Motor neuron (in vitro differentiated cells): ENCODE measurements at regions of chr7 and their contacts with region 1.

Region 1: DNA sequence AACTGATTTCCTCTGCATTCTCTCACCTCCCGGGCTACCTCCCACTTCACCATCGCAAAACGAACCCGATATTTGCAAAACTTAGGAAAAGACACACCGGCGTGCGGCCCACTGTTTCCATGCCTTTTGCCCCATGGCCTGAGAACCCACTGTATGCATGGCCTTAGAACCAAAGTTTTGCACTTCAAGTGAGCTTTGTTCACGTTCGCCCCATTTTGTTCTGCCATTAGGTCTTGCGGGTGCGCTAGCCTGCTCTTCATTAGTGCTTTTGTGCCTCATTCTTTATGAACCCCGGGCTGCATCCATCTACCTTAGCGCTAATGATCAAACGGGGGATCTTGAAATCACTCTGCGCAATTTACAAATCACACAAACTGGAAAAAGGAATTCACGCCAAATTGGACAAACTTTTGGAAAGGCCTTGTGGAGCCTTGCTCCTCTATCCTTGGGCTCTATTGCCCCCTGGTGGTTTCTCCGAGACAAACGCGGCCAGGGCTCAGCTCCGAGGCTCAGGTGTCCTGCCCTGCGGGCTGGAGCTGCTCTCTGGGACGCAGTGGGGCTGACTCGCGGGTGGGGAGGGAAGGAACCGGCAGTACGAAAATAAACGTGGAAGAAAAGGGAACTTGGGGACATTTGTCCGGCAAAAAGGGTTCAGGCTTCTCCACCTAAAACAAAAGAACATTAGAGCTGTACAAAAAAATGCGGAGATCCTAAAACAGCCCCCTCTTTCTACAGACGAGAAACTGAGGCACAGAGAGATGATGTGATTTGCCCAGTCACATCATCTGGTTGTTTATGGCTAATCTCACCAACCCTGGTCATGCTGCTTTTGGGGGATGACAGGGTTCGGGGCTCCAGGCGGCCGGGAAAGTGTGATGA is 300.4 kb upstream of the NFE2L3 start:
- ATAC-seq: peak; percentile 12 to 51 (median 44)
- H3K4me3 ChIP-seq: peak overlapping the region in 3 of 5 donors; percentile 29 to 35 (median 31)
- H3K27ac ChIP-seq: peak overlapping the region in 1 of 2 donors; percentile 40
- H3K4me1 ChIP-seq: peaks cover 24 to 56% of the 10 kb centered on the region in 2 donors

Region 2: DNA sequence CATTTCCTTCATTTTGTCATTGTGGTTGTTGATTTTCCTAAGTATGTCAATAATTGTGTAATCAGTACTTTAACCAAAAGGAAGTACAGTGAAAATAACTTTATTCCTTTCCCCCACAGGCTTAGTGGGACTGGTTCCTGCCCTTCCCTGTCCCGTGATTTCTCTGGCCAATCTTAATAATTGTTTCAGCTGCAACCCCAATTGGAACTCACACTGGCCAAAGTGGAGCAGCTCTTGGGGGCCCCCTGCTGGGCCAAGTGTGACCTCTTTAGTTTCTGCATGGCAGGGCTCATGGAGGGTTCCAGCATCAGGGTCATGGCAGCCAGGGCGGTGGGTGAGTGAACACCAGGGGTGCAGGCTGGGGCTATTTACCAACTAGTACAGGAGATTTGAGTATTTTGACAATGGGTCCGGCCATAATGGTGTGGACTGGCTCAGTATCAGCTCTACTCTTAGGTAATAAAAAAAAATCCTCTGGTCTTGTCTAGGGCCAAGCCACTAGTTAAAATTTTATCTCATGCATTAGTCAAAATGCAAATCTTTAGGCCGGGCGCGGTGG is 758.2 kb before region 1 on chr7:
- in situ Hi-C with region 1: no loop called
- ATAC-seq: peak in 6 of 8 experiments; percentile 25 to 87 (median 68)
- H3K4me3 ChIP-seq: no peak overlapping the region
- H3K27ac ChIP-seq: no peak overlapping the region
- H3K4me1 ChIP-seq: peaks cover 16 to 21% of the 10 kb centered on the region in 2 donors

Region 3: DNA sequence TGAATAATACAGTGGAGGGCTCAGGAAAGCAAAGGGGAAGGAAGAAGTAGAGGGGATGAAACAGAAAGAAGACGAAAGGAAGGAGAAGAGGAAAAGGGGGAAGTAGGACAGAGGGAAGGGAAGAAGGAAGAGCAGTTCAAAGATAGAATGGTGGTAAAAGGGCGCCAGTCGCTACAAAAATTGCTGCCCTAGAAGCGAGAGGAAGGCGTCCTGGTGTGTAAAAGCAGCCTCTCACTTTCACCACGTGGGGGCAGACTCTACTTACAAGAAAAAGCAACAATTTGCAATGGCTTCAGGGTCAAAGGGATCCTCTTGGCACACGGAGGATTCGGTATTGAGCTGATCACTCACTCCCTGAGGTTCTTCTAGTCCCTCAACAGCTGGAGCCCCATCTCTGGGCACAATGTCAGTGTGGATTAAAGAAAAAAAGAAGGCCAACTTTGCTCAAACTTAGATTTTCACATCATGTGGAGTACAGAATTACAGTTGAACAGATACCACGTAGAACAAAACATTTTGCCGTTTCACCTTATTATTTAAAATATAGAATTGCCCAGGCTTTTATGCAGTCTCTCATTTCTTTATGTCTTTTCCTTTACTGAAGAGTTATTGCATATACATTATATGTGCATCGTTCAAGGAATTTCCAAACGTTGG is 591.9 kb before region 1 on chr7:
- in situ Hi-C with region 1: loop called in 6 of 9 experiments (anchors 5 to 25 kb)
- ATAC-seq: peak; percentile 71 to 94 (median 86)
- H3K4me3 ChIP-seq: no peak overlapping the region
- H3K27ac ChIP-seq: no peak overlapping the region
- H3K4me1 ChIP-seq: peaks cover 6 to 34% of the 10 kb centered on the region in 2 donors

Region 4: DNA sequence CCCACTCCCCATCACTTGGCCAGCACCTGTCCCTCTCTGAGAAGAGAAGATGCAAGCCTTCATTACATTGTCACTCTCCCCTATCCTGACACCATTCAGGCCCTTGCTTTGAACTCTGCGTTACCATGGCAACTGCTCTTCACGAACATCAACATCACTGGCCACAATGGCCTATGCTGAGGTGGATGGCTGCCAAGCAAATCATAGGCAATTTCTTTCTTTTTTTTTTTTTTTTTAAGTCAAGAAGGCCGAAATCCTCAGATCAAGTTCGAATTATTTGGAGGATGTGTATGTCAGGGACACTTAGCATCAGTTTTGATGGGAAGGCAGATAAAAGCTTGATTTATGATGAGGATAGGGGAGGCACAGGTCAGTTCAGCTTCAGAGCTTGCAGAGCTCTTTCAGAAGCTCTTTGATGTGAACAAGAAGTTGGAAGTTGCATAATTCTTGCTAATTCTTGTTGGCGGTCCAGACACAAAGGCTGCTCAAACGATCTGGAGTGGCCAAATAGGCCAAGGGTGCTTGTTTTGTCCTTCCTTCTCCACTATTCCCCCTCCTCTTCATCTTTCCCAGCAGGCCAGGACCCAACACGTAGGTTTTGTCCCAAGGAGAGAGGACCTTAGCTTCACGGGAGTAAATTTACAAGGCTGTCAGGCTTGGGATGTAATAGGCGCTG is 443.4 kb before region 1 on chr7:
- in situ Hi-C with region 1: loop called in 2 of 9 experiments (anchors 25 kb)
- ATAC-seq: peak in 7 of 8 experiments; percentile 36 to 95 (median 80)
- H3K4me3 ChIP-seq: no peak overlapping the region
- H3K27ac ChIP-seq: peak overlapping the region in 1 of 2 donors; percentile 49
- H3K4me1 ChIP-seq: peaks cover 24 to 52% of the 10 kb centered on the region in 2 donors

Region 5: DNA sequence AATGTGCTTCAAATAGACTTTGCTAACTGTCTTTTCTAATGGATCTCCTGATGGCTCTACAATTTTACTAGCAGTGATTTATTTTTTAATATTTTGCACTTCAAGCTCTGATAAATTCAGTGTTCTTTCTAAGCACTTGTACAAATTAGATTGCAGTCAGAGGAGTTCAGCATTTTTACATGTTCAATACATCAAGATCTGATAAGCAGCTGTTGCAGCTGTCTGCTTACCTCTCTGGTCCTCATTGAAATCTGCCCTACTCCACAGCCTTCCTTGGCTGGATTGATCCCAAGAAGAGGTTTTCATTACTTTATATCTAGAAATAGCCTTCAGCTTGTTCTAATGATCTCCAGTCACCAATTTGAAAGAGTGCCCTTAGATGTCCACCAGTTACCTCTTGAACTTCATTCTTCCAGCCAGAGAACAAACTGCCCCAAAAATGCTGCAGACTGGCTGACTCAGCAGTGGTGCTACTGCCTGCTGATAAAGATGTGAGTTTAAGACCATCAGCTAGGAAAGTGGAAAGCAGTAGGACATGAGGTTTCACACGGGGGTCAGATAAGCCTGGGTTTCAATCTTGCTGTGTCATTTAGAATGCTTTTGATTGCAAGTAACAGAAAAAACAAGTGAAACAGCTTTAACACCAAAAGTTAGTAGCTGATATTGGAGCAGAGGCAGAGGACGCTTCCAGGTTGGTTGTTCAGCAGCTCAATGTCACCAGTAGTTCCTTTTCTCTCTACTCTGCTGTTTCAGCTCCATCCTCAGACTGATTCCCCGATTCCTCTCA is 272.4 kb before region 1 on chr7:
- in situ Hi-C with region 1: loop called in 3 of 9 experiments (anchors 10 to 25 kb)
- ATAC-seq: no peak
- H3K4me3 ChIP-seq: no peak overlapping the region
- H3K27ac ChIP-seq: no peak overlapping the region
- H3K4me1 ChIP-seq: peaks cover 0 to 16% of the 10 kb centered on the region in 2 donors

Region 6: DNA sequence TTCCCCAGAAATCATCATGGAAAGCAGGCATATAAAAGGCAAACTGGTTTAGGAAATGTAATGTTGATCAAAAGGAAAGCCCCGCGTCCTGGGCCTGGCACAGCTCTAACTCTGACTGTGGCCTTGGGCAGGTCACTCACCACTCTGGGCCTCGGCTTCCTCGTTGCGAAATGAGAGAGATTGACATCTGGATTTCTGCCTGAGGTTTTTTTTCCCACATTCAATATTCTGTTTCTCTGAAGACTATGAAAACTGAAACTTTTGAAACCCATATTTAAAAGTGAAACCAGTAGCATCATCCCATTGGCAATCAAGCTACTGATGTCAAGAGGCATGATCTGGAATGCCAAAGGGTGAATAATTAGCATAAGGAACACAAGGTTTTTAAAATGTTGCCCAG is 253.6 kb before region 1 on chr7:
- in situ Hi-C with region 1: loop called in 1 of 9 experiments (anchors 25 kb)
- ATAC-seq: peak in 3 of 8 experiments; percentile 84 to 96 (median 91)
- H3K4me3 ChIP-seq: no peak overlapping the region
- H3K27ac ChIP-seq: no peak overlapping the region
- H3K4me1 ChIP-seq: peaks cover 0 to 11% of the 10 kb centered on the region in 2 donors